HEK293 (cell line): ENCODE measurements at regions of chr1 and their contacts with region 1.

Region 1: GRCh38 chr1:2381741-2382620 is 9.4 kb downstream of the MORN1 start:
- H3K4me3 ChIP-seq: no peak overlapping the region
- H3K27ac ChIP-seq: no peak overlapping the region
- H3K4me1 ChIP-seq: no peaks in the 10 kb centered on the region
- CTCF ChIP-seq: peak; percentile 96

Region 2: DNA sequence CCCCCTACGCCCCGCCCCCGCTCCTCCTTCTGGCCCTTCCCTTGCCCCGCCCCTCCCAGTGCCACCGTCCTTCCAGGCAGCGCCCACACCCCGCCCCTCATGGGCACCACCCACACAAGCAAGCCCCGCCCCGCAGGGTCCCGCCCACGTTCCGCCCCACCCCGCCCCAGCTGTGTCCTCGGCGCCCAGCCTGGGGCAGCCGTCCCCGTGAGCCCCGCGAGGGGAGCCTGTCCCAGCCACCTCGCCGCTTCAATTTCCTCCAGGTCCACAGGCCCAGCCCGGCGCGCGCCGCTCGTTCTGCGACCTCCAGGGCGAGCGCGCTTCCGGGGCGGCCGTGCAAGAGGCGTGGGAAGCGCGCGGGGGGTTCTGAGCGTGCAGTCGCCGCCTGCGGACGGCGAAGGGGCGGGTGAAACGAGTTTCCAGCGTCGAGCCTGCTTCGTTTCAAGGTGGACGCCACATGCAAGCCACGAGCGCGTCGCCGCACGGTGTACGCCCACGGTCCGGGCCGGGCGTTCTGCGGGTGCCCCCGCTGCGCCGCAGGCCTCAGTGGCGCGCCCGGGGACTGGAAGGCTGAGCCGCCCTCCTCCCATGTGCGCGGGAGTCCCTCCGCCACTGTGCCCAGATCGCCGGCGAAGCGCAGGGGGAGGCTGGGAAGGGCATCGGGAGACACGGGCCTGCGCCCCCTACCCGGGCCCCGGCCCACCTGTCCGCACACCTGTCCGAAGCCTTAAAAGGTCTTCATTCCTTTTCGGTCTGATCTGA is 176.6 kb before region 1 on chr1:
- CTCF ChIA-PET with region 1: interaction called, 14 read pairs
- POLR2A ChIA-PET with region 1: interaction called, 3 read pairs
- H3K4me3 ChIP-seq: peak overlapping the region; percentile 19; the same call in 1 of the 2 replicates
- H3K27ac ChIP-seq: no peak overlapping the region; the same call in 1 of the 2 replicates
- H3K4me1 ChIP-seq: peaks cover 5% of the 10 kb centered on the region
- CTCF ChIP-seq: no peak

Region 3: DNA sequence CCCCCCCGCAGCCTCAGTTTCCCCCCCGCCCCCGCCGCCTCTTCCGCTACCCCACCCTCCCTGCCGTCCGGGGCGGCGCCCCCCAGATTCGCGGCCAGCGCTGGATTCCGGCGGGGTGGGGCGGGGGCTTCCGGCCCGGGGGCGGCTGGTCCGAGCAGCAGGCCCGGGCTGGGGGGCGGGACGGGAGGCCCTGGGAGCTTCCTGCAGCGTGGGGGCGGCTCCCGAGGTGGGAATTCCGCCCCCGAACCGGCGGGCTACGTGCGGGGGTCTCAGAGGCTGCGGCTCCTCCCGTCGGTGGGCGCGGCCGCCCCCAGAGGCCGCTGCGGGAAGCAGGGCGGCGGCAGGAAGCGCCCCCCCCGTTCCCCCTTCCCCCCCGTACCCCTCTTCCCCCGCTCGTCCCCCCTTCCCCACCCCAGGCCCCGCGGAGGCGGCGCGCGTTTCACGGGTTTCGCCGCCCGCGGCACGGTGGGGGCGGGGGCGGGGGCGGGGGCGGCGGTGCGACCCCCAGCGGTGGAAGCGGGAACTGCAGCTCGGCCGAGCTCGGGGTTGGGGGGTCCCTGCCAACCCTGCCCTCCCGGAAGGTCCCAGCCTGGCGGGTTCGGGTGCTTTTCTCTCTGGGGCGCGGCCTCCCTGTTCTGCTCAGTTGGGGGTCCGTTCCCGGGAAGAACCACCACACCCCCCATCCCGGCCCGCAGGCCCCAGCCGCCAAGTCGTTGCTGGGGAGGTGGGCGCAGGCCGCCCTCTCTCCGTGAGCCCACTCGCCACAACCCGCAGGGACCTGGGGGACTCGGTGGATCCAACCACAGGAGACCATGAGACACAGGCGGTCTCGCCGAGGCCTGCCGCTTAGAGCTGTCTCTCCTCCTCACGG is 66.9 kb before region 1 on chr1:
- CTCF ChIA-PET with region 1: interaction called, 12 read pairs
- POLR2A ChIA-PET with region 1: interaction called, 3 read pairs
- H3K4me3 ChIP-seq: peak overlapping the region; percentile 48
- H3K27ac ChIP-seq: peak overlapping the region; percentile 30; the same call in 1 of the 2 replicates
- H3K4me1 ChIP-seq: peaks cover 13% of the 10 kb centered on the region
- CTCF ChIP-seq: 0 out of 2 replicates have a peak, but pooled peaks have one; percentile 34